ENCODE measurements at regions of chr22 and their contacts with region 1.

Region 1: DNA sequence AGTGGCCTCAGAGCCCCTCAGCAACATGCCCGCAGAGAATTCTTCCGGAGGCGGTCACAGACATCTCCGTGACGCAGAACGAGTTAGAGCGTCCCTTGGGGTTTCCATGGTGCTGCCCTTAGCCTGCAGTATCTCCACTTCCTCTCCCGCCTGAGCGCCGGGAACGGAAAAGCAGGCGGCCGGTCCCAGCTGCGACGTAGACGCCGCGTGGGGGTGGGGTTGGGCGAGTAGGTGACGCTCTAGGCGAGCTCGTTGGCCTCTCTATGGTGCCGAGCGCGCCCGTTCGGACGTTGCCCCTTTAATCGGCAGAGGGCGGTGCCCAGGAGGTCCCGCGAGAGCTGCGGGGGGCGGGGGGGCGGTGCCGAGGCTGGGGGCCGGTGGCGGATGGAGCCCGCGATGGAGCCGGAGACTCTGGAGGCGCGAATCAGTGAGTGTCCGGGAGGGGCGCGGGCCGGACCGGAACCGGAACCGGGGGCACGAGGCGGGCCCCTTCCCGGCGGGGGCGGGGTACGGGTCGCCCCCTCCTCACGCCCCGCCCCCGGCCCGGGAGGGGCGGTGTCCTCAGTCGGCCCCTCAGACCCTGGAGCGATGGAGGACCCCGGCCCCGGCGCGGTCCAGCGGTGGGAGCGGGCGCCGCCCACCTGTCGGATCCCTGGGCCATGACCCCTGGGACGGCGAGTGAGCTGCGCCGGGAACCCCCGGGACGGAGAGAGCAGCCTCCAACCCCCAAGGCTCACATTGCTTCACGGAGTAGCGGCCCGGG is at the start of gene GGA1:
- DNase-seq: peak; percentile 87
- H3K4me3 ChIP-seq: peak within 1 kb of the TSS; percentile 80 to 98 (median 91)
- H3K27ac ChIP-seq: peak within 1 kb of the TSS; percentile 94 to 99 (median 96)
- H3K4me1 ChIP-seq: peaks cover 41 to 80% (median 45%) of the 10 kb centered on the region in 3 donors
- H3K27me3 ChIP-seq: no peaks in the 10 kb centered on the region
- CTCF ChIP-seq: no peak
- POLR2A ChIP-seq: peak in 2 of 4 donors; percentile 40 to 54
- total RNA-seq, gene GGA1: 32.2 to 54.3 (median 39.5) TPM

Region 2: DNA sequence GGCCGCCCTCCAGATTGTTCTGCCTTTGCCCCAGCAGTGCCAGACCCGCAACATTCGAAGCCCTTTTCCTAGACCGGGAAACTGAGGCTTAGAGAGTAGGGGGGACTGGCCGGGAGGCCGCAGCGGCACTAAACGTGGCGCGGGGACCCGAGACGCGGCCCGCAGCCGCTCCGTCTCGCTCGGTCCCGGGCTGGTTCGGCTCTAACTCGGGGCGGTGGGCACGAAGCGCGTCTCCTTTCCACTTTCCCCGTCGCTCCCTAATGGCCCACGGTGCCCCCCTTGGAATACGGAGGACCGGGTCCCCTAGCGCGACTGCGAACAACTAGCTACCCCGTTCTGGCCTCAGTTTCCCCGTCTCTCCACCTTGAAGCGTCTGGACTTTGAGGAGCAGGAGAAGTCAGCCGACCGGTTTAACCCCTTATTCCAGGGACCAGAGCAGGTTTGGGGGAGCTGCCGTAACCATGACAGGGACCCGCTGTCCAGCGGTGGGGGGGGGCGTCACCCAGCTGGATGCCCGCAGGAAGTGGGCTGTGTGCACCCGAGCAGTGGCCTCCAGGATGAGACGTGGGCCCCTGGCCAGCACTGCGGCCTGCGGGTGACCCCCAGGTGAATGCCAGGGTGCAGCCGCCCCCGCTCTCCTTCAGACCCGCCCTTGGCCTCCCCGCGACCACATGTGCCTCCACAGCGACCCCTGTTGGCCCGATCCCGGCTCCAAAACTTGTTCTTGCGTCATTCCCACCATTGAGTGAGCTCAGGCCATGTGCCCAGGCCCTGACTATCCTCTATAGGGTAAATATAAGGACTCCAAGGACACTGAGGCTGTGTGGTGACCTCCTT is 47.2 kb before region 1 on chr22:
- intact Hi-C with region 1: loop called (anchors 5 kb)
- DNase-seq: peak; percentile 35
- H3K4me3 ChIP-seq: peak overlapping the region; percentile 78 to 92 (median 91)
- H3K27ac ChIP-seq: peak overlapping the region; percentile 98 to 99 (median 99)
- H3K4me1 ChIP-seq: peaks cover 65 to 82% (median 70%) of the 10 kb centered on the region in 3 donors
- H3K27me3 ChIP-seq: peaks cover 0 to 12% (median 0%) of the 10 kb centered on the region in 4 donors
- CTCF ChIP-seq: peak; percentile 51 to 93 (median 82)
- POLR2A ChIP-seq: peak in 1 of 4 donors; percentile 67

Measured in esophagus squamous epithelium (tissue), 5 donors.